ENCODE measurements at regions of chr16 and their contacts with region 1.

Region 1: DNA sequence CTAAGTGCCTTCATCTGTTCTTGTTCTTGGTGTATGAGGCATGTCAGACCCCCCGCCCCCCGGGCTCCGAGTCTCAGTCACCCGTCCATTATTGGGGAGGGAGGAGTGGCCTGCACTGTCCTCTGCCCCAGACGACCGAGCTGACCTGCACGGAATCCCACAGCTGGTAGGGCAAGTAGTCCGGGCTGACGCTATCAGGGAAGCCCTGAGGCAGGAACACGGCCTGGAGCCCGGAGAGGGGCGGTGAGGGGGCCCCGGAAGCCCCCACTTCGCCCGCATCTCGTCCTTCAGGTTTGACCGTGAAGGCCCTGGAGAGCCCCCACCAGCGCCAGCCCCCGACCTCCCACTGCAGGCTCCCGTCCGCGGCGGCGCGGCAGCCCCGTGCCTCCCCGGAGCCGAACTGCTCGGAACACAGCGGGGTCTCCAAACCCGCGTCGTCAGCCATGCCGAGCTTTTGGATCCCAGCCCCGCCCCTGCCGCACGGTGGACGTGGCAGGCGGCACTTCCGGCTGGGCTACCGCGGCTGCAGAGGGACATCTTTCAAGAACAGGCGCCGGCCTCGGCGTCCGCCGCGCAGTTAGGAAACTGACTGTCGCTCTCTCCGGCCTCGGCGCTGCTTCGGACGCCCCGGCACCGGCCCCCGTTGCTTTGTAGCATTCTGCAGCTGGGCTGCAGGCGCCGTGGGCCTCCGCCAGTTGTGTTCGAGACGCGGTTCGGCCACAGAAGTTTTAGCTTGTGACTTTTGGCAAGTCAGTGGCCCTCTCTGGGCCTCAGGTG is at the start of gene RUSF1:
- DNase-seq: peak; percentile 89
- CTCF ChIP-seq: no peak

Region 2: GRCh38 chr16:31713071-31713944 is 205.2 kb after region 1 on chr16:
- in situ Hi-C with region 1: loop called (anchors 25 kb)
- DNase-seq: peak; percentile 94
- CTCF ChIP-seq: no peak

Region 3: GRCh38 chr16:31873556-31874365 is 365.6 kb after region 1 on chr16 and contains the start of gene ZNF267:
- in situ Hi-C with region 1: no loop called
- DNase-seq: peak; percentile 88
- CTCF ChIP-seq: no peak